GM10248 (cell line): ENCODE measurements at regions of chr5 and their contacts with region 1.

Region 1: GRCh38 chr5:60687927-60688720 is 11.8 kb downstream of the DEPDC1B start:
- DNase-seq: peak; percentile 34
- CTCF ChIP-seq: peak; percentile 19

Region 2: DNA sequence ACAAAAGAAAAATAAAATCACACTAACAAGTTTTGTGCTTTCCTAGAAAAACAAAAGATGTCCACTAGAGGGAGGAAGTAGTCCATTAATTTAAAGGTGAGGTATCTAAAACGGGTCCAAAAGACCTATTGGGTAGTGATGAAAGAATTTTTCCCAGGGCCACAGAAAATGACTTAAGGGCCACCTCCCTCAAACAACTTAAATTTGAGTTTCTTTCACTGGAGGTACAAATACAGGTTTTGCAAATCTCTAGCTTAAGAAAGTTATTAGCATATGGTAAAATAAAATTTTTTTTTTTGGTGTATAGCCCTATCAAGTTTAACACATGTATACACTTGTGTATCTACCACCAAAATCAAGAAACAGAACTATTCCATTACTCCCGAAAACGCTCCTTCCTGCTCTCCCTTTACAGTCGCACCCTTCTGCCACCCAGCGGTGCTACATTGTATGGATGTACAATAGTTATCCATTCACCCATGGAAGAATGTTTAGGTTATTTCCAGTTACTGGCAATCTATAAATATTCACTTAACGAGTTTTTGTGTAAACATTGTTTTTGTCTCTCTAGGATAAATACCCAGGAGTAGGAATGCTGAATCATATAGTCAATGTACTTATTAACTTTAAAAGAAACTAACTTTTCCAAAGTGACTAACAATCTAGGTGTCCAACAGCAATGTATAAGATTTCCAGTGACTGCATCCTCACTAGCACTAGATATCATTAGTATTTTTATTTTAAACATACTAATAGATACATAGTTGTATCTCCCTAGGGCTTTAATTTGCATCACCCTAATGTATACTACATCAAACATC is 10.1 kb before region 1 on chr5:
- CTCF ChIA-PET with region 1: interaction called, 20 read pairs
- POLR2A ChIA-PET with region 1: no interaction called
- DNase-seq: peak; percentile 35
- CTCF ChIP-seq: peak; percentile 50

Region 3: GRCh38 chr5:60699530-60700382 is 11.6 kb after region 1 on chr5 and contains the start of gene DEPDC1B:
- CTCF ChIA-PET with region 1: interaction called, 72 read pairs
- POLR2A ChIA-PET with region 1: no interaction called
- DNase-seq: peak; percentile 92
- CTCF ChIP-seq: peak; percentile 36

Region 4: GRCh38 chr5:60718166-60718892 is 30.2 kb after region 1 on chr5:
- CTCF ChIA-PET with region 1: no interaction called
- POLR2A ChIA-PET with region 1: no interaction called
- DNase-seq: no peak
- CTCF ChIP-seq: no peak